HEK293 (cell line): ENCODE measurements at regions of chr5 and their contacts with region 1.

Region 1: GRCh38 chr5:39948867-39949468 is 524.2 kb upstream of the DAB2 start:
- H3K4me3 ChIP-seq: no peak overlapping the region
- H3K27ac ChIP-seq: no peak overlapping the region
- H3K4me1 ChIP-seq: no peaks in the 10 kb centered on the region
- CTCF ChIP-seq: no peak

Region 2: DNA sequence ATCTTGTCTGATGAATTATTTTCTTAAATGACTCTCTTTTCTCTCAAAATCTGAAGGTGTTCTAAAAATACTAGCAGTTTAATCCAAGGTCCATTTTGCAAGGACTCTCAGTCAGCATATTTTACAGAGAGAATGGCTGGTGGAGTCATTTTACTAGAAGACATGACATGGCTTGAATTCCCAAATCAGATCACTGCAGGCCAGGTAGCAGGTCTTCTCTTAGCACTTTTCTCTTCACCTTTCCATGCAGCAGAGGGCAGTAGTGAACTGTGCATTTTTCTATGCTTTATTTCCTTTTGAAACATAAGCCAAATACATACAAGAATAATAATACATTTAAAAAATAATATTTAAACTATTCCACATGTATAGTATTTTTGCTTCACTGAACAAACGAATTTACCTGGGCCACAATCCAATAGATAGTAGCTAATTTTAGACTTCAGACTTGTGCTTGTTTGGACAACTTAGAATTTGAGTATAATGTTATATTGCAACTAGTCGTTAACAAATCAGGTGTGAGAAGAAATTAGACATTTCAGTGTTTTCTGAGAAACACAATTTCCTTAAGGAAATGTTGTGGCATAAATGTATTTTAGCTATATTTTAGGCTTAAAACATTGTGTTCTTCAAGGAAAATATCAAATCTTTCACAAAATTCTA is 234.8 kb before region 1 on chr5:
- CTCF ChIA-PET with region 1: interaction called, 14 read pairs
- POLR2A ChIA-PET with region 1: no interaction called
- H3K4me3 ChIP-seq: no peak overlapping the region
- H3K27ac ChIP-seq: no peak overlapping the region
- H3K4me1 ChIP-seq: no peaks in the 10 kb centered on the region
- CTCF ChIP-seq: no peak

Region 3: GRCh38 chr5:39933061-39933460 is 15.9 kb before region 1 on chr5:
- CTCF ChIA-PET with region 1: interaction called, 12 read pairs
- POLR2A ChIA-PET with region 1: no interaction called
- H3K4me3 ChIP-seq: no peak overlapping the region
- H3K27ac ChIP-seq: no peak overlapping the region
- H3K4me1 ChIP-seq: no peaks in the 10 kb centered on the region
- CTCF ChIP-seq: no peak

Region 4: GRCh38 chr5:40688127-40688761 is 739.3 kb after region 1 on chr5:
- CTCF ChIA-PET with region 1: interaction called, 28 read pairs
- POLR2A ChIA-PET with region 1: no interaction called
- H3K4me3 ChIP-seq: no peak overlapping the region
- H3K27ac ChIP-seq: no peak overlapping the region
- H3K4me1 ChIP-seq: peaks cover 16% of the 10 kb centered on the region
- CTCF ChIP-seq: peak; percentile 85

Region 5: GRCh38 chr5:40736103-40736875 is 787.3 kb after region 1 on chr5:
- CTCF ChIA-PET with region 1: interaction called, 14 read pairs
- POLR2A ChIA-PET with region 1: no interaction called
- H3K4me3 ChIP-seq: no peak overlapping the region
- H3K27ac ChIP-seq: no peak overlapping the region
- H3K4me1 ChIP-seq: no peaks in the 10 kb centered on the region
- CTCF ChIP-seq: peak; percentile 43; the same call in 1 of the 2 replicates